ENCODE measurements at regions of chr14 and their contacts with region 1.

Region 1: GRCh38 chr14:70887207-70887681 is 20.0 kb upstream of the PCNX1 start:
- DNase-seq: no peak
- ATAC-seq: peak; percentile 11
- H3K4me3 Mint-ChIP-seq: peak overlapping the region; percentile 78
- H3K27ac Mint-ChIP-seq: peak overlapping the region; percentile 97
- H3K4me1 Mint-ChIP-seq: peaks cover 77% of the 10 kb centered on the region
- H3K27me3 Mint-ChIP-seq: no peaks in the 10 kb centered on the region

Region 2: DNA sequence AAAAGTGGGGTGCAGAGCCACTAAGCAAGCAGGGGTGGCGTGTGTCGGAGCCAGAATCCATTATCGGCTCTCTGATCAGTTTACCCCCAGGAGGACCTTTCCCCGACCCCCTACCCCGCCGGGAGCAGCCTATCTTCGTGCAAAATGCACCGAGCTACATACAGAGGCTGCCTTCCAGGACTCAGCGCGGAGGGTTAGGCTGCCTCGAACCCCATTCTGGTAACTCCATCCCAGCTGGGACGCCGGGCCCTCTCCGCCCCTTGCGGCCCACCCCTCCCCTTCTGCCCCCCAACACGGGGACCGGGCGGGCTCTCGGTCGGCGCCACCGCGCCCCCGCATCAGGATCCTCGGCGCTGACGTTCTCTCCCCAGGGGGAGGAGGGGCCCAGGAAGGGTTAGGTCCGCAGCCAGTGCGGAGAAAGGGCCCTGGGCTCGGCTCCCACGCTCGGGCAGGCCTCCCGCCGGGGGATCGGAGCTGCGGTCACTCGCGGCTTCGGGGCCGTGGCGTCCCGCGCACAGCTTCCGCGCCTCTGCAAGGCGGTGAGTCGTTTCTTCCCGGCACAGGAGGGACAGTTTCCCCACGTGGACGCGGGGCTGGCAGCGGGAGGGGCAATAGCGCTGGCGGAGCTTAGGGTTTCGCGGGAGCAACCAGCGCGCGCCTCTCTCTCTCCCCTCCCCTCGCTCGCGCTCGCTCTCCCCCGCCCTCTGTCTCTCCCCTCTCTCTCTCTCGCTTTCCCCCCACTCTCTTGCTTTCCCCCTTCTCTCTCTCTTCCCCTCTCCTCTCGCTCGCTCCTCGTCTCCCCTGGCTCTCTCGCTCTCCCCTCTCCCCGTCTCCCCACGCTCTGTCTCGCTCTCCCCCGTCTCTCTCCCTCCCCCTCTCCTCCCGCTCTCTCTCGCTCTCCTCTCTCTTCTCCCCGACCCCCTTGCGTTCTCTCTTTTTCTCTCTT is 65.4 kb before region 1 on chr14:
- POLR2A ChIA-PET with region 1: interaction called, 10 read pairs
- DNase-seq: peak; percentile 69
- ATAC-seq: peak; percentile 51
- H3K4me3 Mint-ChIP-seq: peak overlapping the region; percentile 92
- H3K27ac Mint-ChIP-seq: peak overlapping the region; percentile 74
- H3K4me1 Mint-ChIP-seq: peaks cover 25% of the 10 kb centered on the region
- H3K27me3 Mint-ChIP-seq: peaks cover 20% of the 10 kb centered on the region

Region 3: GRCh38 chr14:70942342-70942706 is 55.1 kb after region 1 on chr14:
- POLR2A ChIA-PET with region 1: interaction called, 14 read pairs
- DNase-seq: no peak
- ATAC-seq: no peak
- H3K4me3 Mint-ChIP-seq: no peak overlapping the region
- H3K27ac Mint-ChIP-seq: peak overlapping the region; percentile 26
- H3K4me1 Mint-ChIP-seq: peaks cover 41% of the 10 kb centered on the region
- H3K27me3 Mint-ChIP-seq: no peaks in the 10 kb centered on the region

Region 4: DNA sequence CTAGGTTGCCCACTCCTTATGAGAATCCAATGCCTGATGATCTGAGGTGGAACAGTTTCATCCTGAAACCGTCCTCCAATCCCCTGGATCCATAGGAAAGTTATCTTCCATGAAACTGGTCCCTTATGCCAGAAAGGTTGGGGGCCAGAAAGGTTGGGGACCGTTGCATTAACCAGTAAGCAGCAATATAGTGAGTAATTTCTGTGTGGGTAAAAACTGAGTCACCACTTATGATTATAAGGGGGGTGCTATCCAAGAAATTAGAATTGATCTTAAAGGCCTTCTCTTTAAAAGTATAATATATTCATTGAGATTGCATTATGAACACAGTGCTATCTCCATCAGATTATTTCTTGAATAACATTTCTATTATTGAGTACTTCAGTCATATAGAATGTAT is 117.2 kb after region 1 on chr14:
- POLR2A ChIA-PET with region 1: no interaction called
- DNase-seq: no peak
- ATAC-seq: no peak
- H3K4me3 Mint-ChIP-seq: no peak overlapping the region
- H3K27ac Mint-ChIP-seq: no peak overlapping the region
- H3K4me1 Mint-ChIP-seq: peaks cover 11% of the 10 kb centered on the region
- H3K27me3 Mint-ChIP-seq: no peaks in the 10 kb centered on the region

Region 5: GRCh38 chr14:71851271-71851670 is 964.0 kb after region 1 on chr14:
- POLR2A ChIA-PET with region 1: interaction called, 10 read pairs
- DNase-seq: no peak
- ATAC-seq: no peak
- H3K4me3 Mint-ChIP-seq: no peak overlapping the region
- H3K27ac Mint-ChIP-seq: no peak overlapping the region
- H3K4me1 Mint-ChIP-seq: peaks cover 1% of the 10 kb centered on the region
- H3K27me3 Mint-ChIP-seq: peaks cover 5% of the 10 kb centered on the region

Measured in activated naive CD8-positive, alpha-beta T cell treated with anti-CD3 and anti-CD28 coated beads, Interleukin-2, amount 10 ng/mL, durations not matched to agents 7 days and 5 days (primary cell).